RWPE1 (cell line): ENCODE measurements at regions of chr6 and their contacts with region 1.

Region 1: DNA sequence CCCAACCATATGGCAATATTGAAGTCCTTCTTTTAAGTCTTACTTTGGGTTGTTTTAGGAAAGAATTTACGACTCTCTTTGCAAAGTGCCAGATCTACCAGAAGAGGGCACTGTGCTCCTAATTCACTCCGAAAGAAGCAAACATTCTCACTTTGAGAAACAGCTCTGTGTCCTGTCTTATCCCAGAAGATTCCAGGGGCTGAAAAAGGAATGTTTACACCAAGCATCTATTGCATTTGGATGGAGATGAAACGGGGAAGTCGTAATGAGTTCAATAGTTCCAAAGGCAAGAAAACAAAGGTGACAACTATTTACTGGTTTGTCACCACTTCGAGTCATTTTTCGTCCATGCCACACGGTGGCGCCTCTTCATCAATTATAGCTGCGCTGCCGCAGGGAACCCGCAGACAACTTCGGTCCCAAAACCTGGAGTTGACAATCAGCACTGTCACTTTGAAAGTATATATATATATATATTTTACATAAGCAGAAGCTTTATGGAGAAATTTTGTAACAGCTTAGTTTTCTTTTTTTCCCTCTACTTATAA is 121.6 kb downstream of the MOXD1 start:
- DNase-seq: peak; percentile 47
- H3K27ac ChIP-seq: no peak overlapping the region
- CTCF ChIP-seq: peak; percentile 90

Region 2: GRCh38 chr6:131924881-131925474 is 354.7 kb before region 1 on chr6:
- CTCF ChIA-PET with region 1: interaction called, 13 read pairs
- POLR2A ChIA-PET with region 1: no interaction called
- DNase-seq: peak; percentile 34
- H3K27ac ChIP-seq: no peak overlapping the region
- CTCF ChIP-seq: peak; percentile 65

Region 3: GRCh38 chr6:132261354-132261753 is 18.3 kb before region 1 on chr6:
- CTCF ChIA-PET with region 1: interaction called, 11 read pairs
- POLR2A ChIA-PET with region 1: no interaction called
- DNase-seq: no peak
- H3K27ac ChIP-seq: no peak overlapping the region
- CTCF ChIP-seq: no peak

Region 4: GRCh38 chr6:132289756-132290155 is 10.1 kb after region 1 on chr6:
- CTCF ChIA-PET with region 1: interaction called, 12 read pairs
- POLR2A ChIA-PET with region 1: no interaction called
- DNase-seq: no peak
- H3K27ac ChIP-seq: no peak overlapping the region
- CTCF ChIP-seq: no peak

Region 5: GRCh38 chr6:132300323-132300949 is 20.8 kb after region 1 on chr6:
- CTCF ChIA-PET with region 1: interaction called, 21 read pairs
- POLR2A ChIA-PET with region 1: no interaction called
- DNase-seq: peak; percentile 41
- H3K27ac ChIP-seq: no peak overlapping the region
- CTCF ChIP-seq: peak; percentile 48

Region 6: DNA sequence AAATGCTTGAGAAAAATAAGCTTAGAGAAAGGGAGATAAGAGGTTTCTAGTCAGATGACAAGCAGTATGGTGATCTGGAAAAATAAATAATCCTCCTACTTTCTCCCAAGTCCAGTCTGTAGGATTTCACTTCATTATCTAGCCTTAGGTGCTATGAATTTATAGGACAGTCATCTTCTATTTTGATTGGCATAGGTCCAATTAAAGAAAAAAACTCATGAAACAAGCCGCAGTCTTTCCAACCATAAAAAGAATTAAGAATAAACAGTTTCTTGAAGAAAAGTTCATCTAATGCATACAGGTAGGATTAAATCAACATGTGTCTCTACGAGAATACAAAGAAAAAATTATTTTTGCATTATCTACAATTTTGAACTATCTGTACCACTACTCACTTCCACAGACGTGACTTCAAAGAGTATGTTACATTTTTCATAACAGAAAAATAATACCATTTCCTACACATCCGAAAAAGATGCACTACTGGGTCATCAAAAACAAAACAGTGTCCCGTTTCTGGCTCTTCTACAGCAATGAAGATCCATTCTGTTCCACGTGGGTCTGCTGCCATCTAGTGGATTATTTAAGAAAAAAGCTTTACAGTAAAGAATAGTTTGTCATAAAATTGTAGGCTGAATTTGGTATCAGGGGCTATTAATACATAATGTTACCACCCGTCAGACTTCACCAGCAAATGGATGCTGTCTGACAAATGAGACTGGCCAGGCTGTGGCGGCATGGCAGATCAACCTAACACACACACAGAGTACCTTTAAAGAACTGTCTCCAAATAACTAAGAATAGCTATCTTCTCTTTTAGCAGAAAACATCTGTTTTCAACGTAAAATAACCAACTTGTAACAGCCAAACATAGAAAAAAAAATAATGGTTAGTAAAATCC is 204.4 kb after region 1 on chr6:
- CTCF ChIA-PET with region 1: interaction called, 49 read pairs
- POLR2A ChIA-PET with region 1: no interaction called
- DNase-seq: peak; percentile 55
- H3K27ac ChIP-seq: no peak overlapping the region
- CTCF ChIP-seq: peak; percentile 77